ENCODE measurements at regions of chr6 and their contacts with region 1.

Region 1: GRCh38 chr6:32984605-32985389 is 16.4 kb downstream of the BRD2 start:
- DNase-seq: peak; percentile 76
- ATAC-seq: peak; percentile 85
- H3K4me3 ChIP-seq: no peak overlapping the region
- H3K27ac ChIP-seq: no peak overlapping the region
- H3K4me1 ChIP-seq: peaks cover 28% of the 10 kb centered on the region
- H3K27me3 ChIP-seq: no peaks in the 10 kb centered on the region
- CTCF ChIP-seq: peak; percentile 94

Region 2: DNA sequence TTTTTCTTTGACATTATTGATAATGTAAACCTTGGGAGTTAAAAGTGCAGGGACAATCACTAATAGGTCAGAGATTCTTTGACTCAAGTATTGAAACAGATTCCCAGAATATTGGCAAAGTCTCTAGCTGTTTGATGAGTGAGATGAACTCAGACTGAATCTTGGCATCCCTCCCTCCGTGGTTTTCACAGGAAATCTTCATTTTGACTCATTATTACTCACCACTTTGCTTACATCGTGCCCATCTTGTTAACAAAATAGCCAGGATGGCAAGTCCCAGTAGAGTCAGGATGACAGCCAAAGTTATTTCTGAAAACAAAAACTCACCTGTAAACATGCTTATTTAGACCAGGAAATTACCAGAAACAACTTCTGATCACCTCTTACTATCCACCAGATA is 615.1 kb before region 1 on chr6:
- CTCF ChIA-PET with region 1: no interaction called
- POLR2A ChIA-PET with region 1: no interaction called
- in situ Hi-C with region 1: no loop called
- intact Hi-C with region 1: no loop called
- DNase-seq: peak; percentile 30
- ATAC-seq: no peak; the same call in 1 of the 2 replicates
- H3K4me3 ChIP-seq: no peak overlapping the region
- H3K27ac ChIP-seq: no peak overlapping the region
- H3K4me1 ChIP-seq: no peaks in the 10 kb centered on the region
- H3K27me3 ChIP-seq: no peaks in the 10 kb centered on the region
- CTCF ChIP-seq: no peak

Region 3: DNA sequence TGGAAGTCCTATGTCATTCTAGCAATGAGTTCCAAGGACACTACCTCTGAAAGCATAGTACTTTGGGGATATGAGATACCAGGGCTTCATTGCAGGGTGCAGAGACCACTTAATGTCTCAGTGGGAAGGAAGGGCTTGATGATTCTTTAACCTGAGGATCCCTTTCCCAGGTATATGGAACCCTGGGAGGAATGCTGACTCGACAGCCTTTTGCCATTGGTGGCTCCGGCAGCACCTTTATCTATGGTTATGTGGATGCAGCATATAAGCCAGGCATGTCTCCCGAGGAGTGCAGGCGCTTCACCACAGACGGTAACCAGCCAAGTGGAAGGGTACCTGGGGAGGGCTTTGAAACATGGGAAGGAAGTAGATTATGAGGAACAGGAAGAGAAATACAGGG is 126.6 kb before region 1 on chr6:
- CTCF ChIA-PET with region 1: no interaction called
- POLR2A ChIA-PET with region 1: no interaction called
- in situ Hi-C with region 1: no loop called
- intact Hi-C with region 1: no loop called
- DNase-seq: no peak
- ATAC-seq: no peak
- H3K4me3 ChIP-seq: no peak overlapping the region
- H3K27ac ChIP-seq: no peak overlapping the region
- H3K4me1 ChIP-seq: peaks cover 20% of the 10 kb centered on the region
- H3K27me3 ChIP-seq: no peaks in the 10 kb centered on the region
- CTCF ChIP-seq: no peak

Region 4: GRCh38 chr6:32885698-32886286 is 99.0 kb before region 1 on chr6:
- CTCF ChIA-PET with region 1: interaction called, 11 read pairs
- POLR2A ChIA-PET with region 1: no interaction called
- in situ Hi-C with region 1: no loop called
- intact Hi-C with region 1: loop called (anchors 5 kb)
- DNase-seq: no peak
- ATAC-seq: peak; percentile 80
- H3K4me3 ChIP-seq: no peak overlapping the region
- H3K27ac ChIP-seq: no peak overlapping the region
- H3K4me1 ChIP-seq: no peaks in the 10 kb centered on the region
- H3K27me3 ChIP-seq: no peaks in the 10 kb centered on the region
- CTCF ChIP-seq: peak; percentile 72

Region 5: DNA sequence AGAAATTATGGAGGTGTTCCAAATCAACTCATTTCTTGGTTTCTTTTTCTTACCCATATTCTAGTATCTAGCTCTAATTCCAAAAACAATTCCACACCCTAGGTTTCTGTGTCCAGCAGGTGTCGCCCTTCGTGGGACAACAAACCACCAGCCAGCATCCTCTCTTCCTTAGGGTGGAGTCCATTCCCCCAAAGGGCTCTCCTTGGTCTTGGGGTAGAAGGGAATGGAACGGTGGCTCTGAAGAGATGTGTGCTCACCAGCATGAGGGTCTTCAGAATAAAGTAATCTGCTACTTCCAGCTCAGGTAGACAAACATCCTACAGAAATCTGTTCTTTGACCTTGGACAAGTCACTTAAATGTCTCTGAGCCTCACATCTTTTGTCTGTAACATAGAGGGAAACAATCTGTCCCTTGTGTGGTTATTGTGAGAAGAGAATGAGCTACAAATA is 51.1 kb before region 1 on chr6:
- CTCF ChIA-PET with region 1: interaction called, 20 read pairs
- POLR2A ChIA-PET with region 1: no interaction called
- in situ Hi-C with region 1: no loop called
- intact Hi-C with region 1: loop called (anchors 2 kb)
- DNase-seq: peak; percentile 48
- ATAC-seq: peak; percentile 83
- H3K4me3 ChIP-seq: no peak overlapping the region
- H3K27ac ChIP-seq: no peak overlapping the region
- H3K4me1 ChIP-seq: no peaks in the 10 kb centered on the region
- H3K27me3 ChIP-seq: peaks cover 2% of the 10 kb centered on the region; the same call in 1 of the 2 replicates
- CTCF ChIP-seq: peak; percentile 89

Region 6: GRCh38 chr6:32952817-32953739 is 31.7 kb before region 1 on chr6 and contains the start of gene HLA-DMA:
- CTCF ChIA-PET with region 1: interaction called, 10 read pairs
- POLR2A ChIA-PET with region 1: no interaction called
- in situ Hi-C with region 1: no loop called
- intact Hi-C with region 1: no loop called
- DNase-seq: no peak
- ATAC-seq: peak; percentile 87
- H3K4me3 ChIP-seq: no peak within 1 kb of the TSS
- H3K27ac ChIP-seq: no peak within 1 kb of the TSS
- H3K4me1 ChIP-seq: no peaks in the 10 kb centered on the region
- H3K27me3 ChIP-seq: no peaks in the 10 kb centered on the region
- CTCF ChIP-seq: peak; percentile 75
- total RNA-seq, gene HLA-DMA: 2.8 TPM

Region 7: GRCh38 chr6:33217681-33218080 is 232.9 kb after region 1 on chr6:
- CTCF ChIA-PET with region 1: no interaction called
- POLR2A ChIA-PET with region 1: no interaction called
- in situ Hi-C with region 1: no loop called
- intact Hi-C with region 1: no loop called
- DNase-seq: no peak
- ATAC-seq: no peak
- H3K4me3 ChIP-seq: no peak overlapping the region
- H3K27ac ChIP-seq: no peak overlapping the region
- H3K4me1 ChIP-seq: peaks cover 5% of the 10 kb centered on the region
- H3K27me3 ChIP-seq: 0 out of 2 replicates have a peak, but pooled peaks cover 2% of the 10 kb centered on the region
- CTCF ChIP-seq: no peak

Measured in Panc1 (cell line).